ENCODE measurements at regions of chr1 and their contacts with region 1.

Region 1: GRCh38 chr1:35192853-35193664 is at the start of gene SFPQ:
- DNase-seq: peak; percentile 96 to 98 (median 97)
- ATAC-seq: peak; percentile 94 to 99 (median 98)
- H3K4me3 ChIP-seq: peak within 1 kb of the TSS; percentile 85 to 100 (median 99)
- H3K27ac ChIP-seq: peak within 1 kb of the TSS; percentile 97 to 100 (median 98)
- H3K4me1 ChIP-seq: peaks cover 9 to 41% (median 33%) of the 10 kb centered on the region in 12 donors
- H3K27me3 ChIP-seq: no peaks in the 10 kb centered on the region
- CTCF ChIP-seq: no peak
- POLR2A ChIP-seq: peak; percentile 40 to 92
- total RNA-seq, gene SFPQ: 58.6 to 114 (median 76.4) TPM

Region 2: DNA sequence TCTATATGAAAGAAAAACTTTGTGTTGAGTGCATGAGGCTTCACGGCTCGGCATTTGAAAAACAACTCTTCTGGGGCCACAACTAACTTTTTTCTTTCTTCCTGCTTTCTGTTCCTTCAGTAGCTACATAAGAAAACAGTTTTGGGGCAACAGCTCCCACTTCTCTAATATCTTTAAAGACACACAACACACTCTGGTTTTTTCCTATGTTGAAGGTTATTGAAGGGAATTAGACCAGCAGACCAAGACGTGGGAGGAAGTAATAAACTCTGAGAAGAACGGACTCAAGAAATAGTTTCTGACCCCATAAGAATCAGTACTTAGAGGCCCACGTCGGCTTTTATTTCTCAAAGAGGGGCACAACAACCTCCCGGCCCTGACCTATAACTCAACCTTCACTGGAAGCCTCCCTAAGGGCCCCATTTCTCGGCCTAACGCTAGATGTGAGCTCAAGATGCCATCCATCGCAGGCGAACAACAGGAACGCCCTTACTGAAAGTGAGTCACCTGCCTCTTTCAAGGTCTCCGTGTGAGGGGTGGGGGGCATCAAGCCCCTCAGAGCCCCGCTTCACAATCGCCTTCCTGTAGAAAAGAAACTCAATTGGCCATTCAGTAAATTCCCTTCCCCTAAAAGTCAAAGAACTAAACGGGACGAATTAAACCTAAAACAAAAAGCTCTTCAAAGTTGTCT is 162.2 kb before region 1 on chr1:
- intact Hi-C with region 1: loop called in 2 of 10 experiments (anchors 5 to 10 kb)
- DNase-seq: peak in 2 of 5 donors; percentile 11 to 27
- ATAC-seq: peak in 3 of 4 donors; percentile 33 to 44 (median 43)
- H3K4me3 ChIP-seq: peak overlapping the region; percentile 60 to 95 (median 73)
- H3K27ac ChIP-seq: peak overlapping the region; percentile 81 to 96 (median 93)
- H3K4me1 ChIP-seq: peaks cover 0 to 28% (median 15%) of the 10 kb centered on the region in 12 donors
- H3K27me3 ChIP-seq: no peaks in the 10 kb centered on the region
- CTCF ChIP-seq: no peak
- POLR2A ChIP-seq: no peak

Region 3: DNA sequence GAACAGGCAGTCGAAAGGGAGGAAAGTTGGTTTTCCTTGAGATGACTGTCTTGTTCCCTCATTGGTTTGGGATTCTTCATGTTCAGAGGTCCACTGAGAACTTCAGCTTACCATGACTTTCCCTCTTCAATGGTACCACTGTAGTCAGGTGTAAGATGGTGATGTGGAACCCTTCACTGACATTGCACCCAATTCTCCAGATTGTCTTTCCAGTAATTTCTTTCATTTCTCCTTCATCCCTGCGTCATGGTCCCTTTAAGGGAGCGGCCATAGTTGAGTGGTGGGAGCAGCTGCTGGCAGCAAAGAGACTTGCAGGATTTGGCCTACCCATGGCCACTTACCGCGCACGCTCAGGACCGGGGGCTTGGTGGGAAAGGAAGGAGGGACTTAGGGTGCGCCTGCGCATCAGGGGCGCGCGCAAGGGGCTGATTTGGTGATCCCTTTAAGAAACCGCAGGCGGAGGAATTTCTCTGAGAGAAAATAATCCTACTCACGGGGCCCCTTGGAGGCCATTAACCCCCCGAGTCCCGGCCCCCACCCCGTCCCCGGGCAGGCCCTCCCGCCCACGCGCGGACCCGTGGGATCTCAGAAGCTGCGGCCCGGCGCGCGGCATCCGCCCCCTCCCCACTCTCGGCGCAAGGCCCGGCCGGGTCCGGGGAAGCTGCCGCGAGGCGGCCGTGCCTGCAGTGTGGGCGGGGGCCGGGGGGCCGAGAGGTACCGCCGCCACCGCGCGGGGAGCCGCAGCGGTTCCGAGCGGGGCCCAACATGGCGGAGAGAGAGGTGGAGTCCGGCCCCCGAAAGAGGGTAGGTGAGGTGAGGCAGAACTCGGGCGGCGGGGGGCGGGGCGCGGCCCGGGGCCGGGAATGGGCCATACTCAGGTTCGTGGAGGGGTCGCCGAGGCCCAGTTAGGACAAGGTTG is 75.5 kb after region 1 on chr1 and contains the start of gene ZMYM4:
- intact Hi-C with region 1: loop called in 2 of 10 experiments (anchors 5 kb)
- DNase-seq: peak; percentile 93 to 97 (median 96)
- ATAC-seq: peak; percentile 96 to 99 (median 98)
- H3K4me3 ChIP-seq: peak within 1 kb of the TSS; percentile 72 to 97 (median 87)
- H3K27ac ChIP-seq: peak within 1 kb of the TSS; percentile 75 to 94 (median 88)
- H3K4me1 ChIP-seq: peaks cover 0 to 44% (median 15%) of the 10 kb centered on the region in 12 donors
- H3K27me3 ChIP-seq: no peaks in the 10 kb centered on the region
- CTCF ChIP-seq: peak in 4 of 12 donors; percentile 7 to 15 (median 10)
- POLR2A ChIP-seq: peak in 1 of 2 donors; percentile 46
- total RNA-seq, gene ZMYM4: 18.8 to 44.3 (median 36.1) TPM

Region 4: GRCh38 chr1:35406103-35406502 is 213.0 kb after region 1 on chr1:
- intact Hi-C with region 1: loop called in 1 of 10 experiments (anchors 10 kb)
- DNase-seq: no peak
- ATAC-seq: no peak
- H3K4me3 ChIP-seq: no peak overlapping the region
- H3K27ac ChIP-seq: no peak overlapping the region
- H3K4me1 ChIP-seq: no peaks in the 10 kb centered on the region
- H3K27me3 ChIP-seq: no peaks in the 10 kb centered on the region
- CTCF ChIP-seq: no peak
- POLR2A ChIP-seq: no peak

Region 5: GRCh38 chr1:35488336-35488735 is 295.3 kb after region 1 on chr1:
- intact Hi-C with region 1: no loop called
- DNase-seq: no peak
- ATAC-seq: peak in 1 of 4 donors; percentile 13
- H3K4me3 ChIP-seq: peak overlapping the region in 6 of 12 donors; percentile 11 to 40 (median 22)
- H3K27ac ChIP-seq: peak overlapping the region in 8 of 12 donors; percentile 14 to 71 (median 35)
- H3K4me1 ChIP-seq: peaks cover 0 to 22% (median 9%) of the 10 kb centered on the region in 12 donors
- H3K27me3 ChIP-seq: no peaks in the 10 kb centered on the region
- CTCF ChIP-seq: no peak
- POLR2A ChIP-seq: no peak

Region 6: GRCh38 chr1:35564037-35564883 is 371.2 kb after region 1 on chr1:
- intact Hi-C with region 1: loop called in 3 of 10 experiments (anchors 10 kb)
- DNase-seq: peak; percentile 72 to 87 (median 78)
- ATAC-seq: peak in 3 of 4 donors; percentile 29 to 49 (median 43)
- H3K4me3 ChIP-seq: no peak overlapping the region
- H3K27ac ChIP-seq: no peak overlapping the region
- H3K4me1 ChIP-seq: peaks cover 0 to 28% (median 11%) of the 10 kb centered on the region in 12 donors
- H3K27me3 ChIP-seq: peaks cover 0 to 1% (median 0%) of the 10 kb centered on the region in 9 donors
- CTCF ChIP-seq: peak; percentile 59 to 85 (median 78)
- POLR2A ChIP-seq: no peak